ENCODE measurements at regions of chr6 and their contacts with region 1.

Region 1: GRCh38 chr6:144104898-144105487 is 9.6 kb upstream of the SF3B5 start:
- DNase-seq: no peak

Region 2: GRCh38 chr6:144066741-144067484 is 38.1 kb before region 1 on chr6:
- intact Hi-C with region 1: no loop called
- DNase-seq: no peak

Region 3: GRCh38 chr6:144181639-144182038 is 76.6 kb after region 1 on chr6:
- intact Hi-C with region 1: no loop called
- DNase-seq: no peak

Region 4: GRCh38 chr6:144215932-144216667 is 111.1 kb after region 1 on chr6:
- intact Hi-C with region 1: loop called (anchors 1 kb)
- DNase-seq: peak; percentile 88 to 99 (median 92)

Region 5: GRCh38 chr6:144482142-144482541 is 377.1 kb after region 1 on chr6:
- intact Hi-C with region 1: loop called (anchors 5 kb)
- DNase-seq: peak in 8 of 10 donors; percentile 47 to 89 (median 62)

Measured in posterior cingulate gyrus (tissue), 11 donors.